ENCODE measurements at regions of chr19 and their contacts with region 1.

Region 1: GRCh38 chr19:41353466-41354342 is at the start of gene TGFB1:
- DNase-seq: peak; percentile 95
- ATAC-seq: peak; percentile 58
- H3K4me3 Mint-ChIP-seq: peak within 1 kb of the TSS; percentile 99
- H3K27ac Mint-ChIP-seq: peak within 1 kb of the TSS; percentile 93
- H3K4me1 Mint-ChIP-seq: peaks cover 59% of the 10 kb centered on the region
- H3K27me3 Mint-ChIP-seq: no peaks in the 10 kb centered on the region
- total RNA-seq, gene TGFB1: 171 to 179 TPM

Region 2: DNA sequence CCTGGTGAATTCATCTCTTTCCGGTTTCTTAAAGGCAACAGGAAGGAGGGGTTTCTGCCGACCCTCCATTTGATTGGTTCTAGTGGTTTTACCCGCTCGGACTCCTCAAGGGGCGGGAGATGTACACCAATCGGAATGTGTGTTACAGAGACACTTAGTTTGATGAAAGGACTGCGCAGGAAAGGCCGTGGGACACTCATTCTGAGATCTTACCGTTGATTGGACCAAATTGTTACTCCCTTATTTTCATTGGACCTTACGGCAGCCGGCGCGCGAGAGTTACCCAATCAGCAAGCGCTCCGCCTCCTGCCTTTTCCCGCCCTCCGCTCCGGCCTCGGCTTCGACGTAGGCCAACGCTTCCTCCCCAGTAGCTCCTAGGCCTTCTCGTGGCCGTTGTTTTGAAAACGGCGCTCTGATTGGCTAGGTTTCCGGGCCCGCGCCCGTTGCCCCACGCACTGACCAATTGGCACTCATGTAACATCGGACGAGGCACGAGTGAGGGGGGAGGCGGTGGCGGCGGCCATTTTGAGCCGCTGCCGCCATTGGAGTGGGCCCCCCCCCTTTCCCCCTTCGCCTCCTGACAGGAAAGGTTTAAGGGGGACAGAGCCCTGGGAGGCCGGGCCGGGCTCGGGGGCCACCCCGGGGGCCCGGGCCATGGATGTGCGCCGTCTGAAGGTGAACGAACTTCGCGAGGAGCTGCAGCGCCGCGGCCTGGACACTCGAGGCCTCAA is 89.7 kb before region 1 on chr19 and contains the start of gene HNRNPUL1:
- CTCF ChIA-PET with region 1: interaction called, 14 read pairs
- DNase-seq: peak; percentile 99
- ATAC-seq: peak; percentile 68
- H3K4me3 Mint-ChIP-seq: peak within 1 kb of the TSS; percentile 79
- H3K27ac Mint-ChIP-seq: peak within 1 kb of the TSS; percentile 99
- H3K4me1 Mint-ChIP-seq: peaks cover 36% of the 10 kb centered on the region
- H3K27me3 Mint-ChIP-seq: no peaks in the 10 kb centered on the region
- total RNA-seq, gene HNRNPUL1: 342 to 348 TPM

Region 3: DNA sequence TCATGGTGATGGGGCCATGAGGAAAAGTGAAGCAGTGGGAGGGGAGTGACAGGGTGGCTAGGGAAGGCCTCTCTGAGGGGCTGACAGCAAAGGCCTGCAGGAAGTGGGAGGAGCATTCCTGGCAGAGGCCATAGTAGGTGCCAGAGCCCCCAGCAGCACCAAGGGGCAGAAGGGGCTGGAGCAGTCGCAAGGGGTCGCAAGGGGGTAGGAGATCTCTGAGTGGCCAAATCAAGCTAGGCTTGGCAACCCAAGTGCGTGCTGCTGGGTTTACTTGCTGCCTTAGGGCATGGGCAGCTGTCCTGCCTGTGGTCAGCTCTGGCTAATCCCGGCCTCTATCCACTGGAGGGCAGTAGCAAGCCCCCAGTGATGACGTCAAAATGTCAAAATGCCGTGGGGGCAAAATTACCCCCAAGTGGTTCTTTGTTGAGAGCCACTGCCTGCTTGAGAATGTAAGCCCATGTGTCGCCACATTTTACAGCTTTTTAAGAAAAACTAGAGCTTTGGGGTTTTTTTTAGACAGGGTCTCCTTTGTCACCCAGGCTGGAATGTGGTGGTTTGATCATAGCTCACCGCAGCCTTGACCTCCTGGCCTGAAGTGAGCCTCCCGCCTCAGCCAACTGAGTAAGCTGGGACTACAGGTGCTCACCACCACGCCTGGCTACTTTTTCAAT is 32.0 kb before region 1 on chr19:
- CTCF ChIA-PET with region 1: interaction called, 37 read pairs
- DNase-seq: no peak
- ATAC-seq: no peak
- H3K4me3 Mint-ChIP-seq: no peak overlapping the region
- H3K27ac Mint-ChIP-seq: no peak overlapping the region
- H3K4me1 Mint-ChIP-seq: peaks cover 28% of the 10 kb centered on the region
- H3K27me3 Mint-ChIP-seq: no peaks in the 10 kb centered on the region

Region 4: DNA sequence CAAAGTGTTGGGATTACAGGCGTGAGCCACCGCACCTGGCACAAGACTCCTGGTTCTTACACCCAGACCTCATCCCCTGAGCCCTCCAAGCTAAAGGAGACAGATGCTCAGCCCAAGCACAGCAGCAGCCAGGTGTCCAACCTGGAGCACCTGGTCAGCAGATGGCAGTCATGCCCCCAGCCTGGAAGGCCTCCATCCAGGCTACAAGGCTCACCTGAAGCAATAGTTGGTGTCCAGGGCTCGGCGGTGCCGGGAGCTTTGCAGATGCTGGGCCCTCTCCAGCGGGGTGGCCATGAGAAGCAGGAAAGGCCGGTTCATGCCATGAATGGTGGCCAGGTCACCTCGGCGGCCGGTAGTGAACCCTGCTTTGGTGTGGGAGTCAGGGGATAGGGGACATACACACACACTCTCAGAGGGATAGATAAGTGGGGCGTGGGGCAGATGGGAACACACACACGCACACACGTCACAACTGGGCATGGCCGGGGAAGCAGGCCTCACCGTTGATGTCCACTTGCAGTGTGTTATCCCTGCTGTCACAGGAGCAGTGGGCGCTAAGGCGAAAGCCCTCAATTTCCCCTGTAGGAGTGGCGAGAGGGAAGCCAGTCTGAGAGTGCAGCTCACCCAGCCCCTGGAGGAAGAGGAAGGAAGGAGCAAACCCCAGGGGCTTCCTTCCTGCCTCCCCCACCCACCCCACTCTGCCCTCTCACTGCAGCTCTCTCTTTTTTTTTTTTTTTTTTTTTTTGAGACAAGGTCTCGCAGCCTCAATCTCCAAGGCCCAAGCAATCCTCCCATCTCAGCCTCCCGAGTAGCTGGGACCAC is 11.8 kb before region 1 on chr19:
- CTCF ChIA-PET with region 1: interaction called, 10 read pairs
- DNase-seq: no peak
- ATAC-seq: peak; percentile 49
- H3K4me3 Mint-ChIP-seq: peak overlapping the region; percentile 30
- H3K27ac Mint-ChIP-seq: peak overlapping the region; percentile 63
- H3K4me1 Mint-ChIP-seq: peaks cover 48% of the 10 kb centered on the region
- H3K27me3 Mint-ChIP-seq: no peaks in the 10 kb centered on the region

Region 5: DNA sequence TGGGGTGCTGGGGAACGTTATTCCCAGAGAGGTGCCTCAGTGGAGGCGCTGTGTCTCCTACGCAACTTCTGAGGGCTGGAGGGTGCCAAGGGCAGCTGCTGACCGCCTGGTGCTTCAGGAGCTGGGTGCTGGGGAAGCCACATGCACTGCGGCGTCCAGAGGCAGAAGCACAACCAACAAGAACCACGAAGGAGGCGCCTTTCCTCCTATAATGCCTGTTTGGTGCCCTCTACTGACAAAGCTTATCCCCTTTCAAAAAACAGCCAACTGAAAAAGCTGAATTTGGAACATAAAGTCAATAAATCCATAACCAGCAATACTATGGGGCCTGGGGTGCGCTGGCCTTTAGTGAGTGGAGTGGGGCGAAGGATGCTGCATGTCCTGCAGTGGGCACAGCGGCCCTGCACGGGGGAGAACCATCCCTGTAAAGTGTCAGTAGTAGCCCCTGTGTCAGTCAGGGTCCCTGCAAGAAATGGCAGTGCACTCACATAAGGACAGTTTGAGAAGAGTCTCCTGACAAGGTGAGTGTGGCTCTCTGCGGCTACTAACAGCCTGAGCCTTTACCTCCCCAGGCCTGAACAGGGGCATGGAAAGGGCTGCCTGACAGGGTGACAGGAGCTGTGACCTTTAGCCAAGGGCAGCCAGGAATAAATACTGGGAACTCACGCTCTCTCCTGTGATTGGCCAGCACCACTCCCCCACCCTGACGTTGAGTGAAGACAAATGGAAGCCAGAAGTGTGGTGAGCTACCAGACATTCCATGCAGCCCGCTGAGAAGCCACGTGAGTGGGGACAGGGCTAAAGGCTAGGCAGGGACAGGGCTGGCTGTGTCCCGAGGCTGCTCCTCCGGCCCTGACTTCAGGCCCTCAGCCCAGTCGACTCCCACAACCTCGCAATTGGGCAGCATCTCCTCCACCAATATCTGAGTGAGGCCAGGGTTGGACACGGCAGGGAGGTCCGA is 78.0 kb after region 1 on chr19:
- CTCF ChIA-PET with region 1: interaction called, 10 read pairs
- DNase-seq: peak; percentile 48
- ATAC-seq: no peak
- H3K4me3 Mint-ChIP-seq: no peak overlapping the region
- H3K27ac Mint-ChIP-seq: no peak overlapping the region
- H3K4me1 Mint-ChIP-seq: peaks cover 28% of the 10 kb centered on the region
- H3K27me3 Mint-ChIP-seq: no peaks in the 10 kb centered on the region

Region 6: GRCh38 chr19:41495589-41495988 is 141.9 kb after region 1 on chr19:
- CTCF ChIA-PET with region 1: no interaction called
- DNase-seq: no peak
- ATAC-seq: no peak
- H3K4me3 Mint-ChIP-seq: no peak overlapping the region
- H3K27ac Mint-ChIP-seq: no peak overlapping the region
- H3K4me1 Mint-ChIP-seq: no peaks in the 10 kb centered on the region
- H3K27me3 Mint-ChIP-seq: peaks cover 27% of the 10 kb centered on the region